Transverse colon (tissue), 4 donors: ENCODE measurements at regions of chr13 and their contacts with region 1.

Region 1: GRCh38 chr13:92317066-92317465 is 909.5 kb upstream of the GPC6 start:
- DNase-seq: no peak
- H3K4me3 ChIP-seq: no peak overlapping the region
- H3K27ac ChIP-seq: no peak overlapping the region
- H3K4me1 ChIP-seq: no peaks in the 10 kb centered on the region
- H3K27me3 ChIP-seq: no peaks in the 10 kb centered on the region
- CTCF ChIP-seq: no peak
- EP300 ChIP-seq: no peak
- POLR2A ChIP-seq: no peak

Region 2: GRCh38 chr13:92460479-92460878 is 143.4 kb after region 1 on chr13:
- in situ Hi-C with region 1: no loop called
- intact Hi-C with region 1: loop called (anchors 2 kb)
- DNase-seq: no peak
- H3K4me3 ChIP-seq: no peak overlapping the region
- H3K27ac ChIP-seq: peak overlapping the region in 2 of 4 donors; percentile 4 to 9
- H3K4me1 ChIP-seq: peaks cover 0 to 4% (median 0%) of the 10 kb centered on the region in 4 donors
- H3K27me3 ChIP-seq: no peaks in the 10 kb centered on the region
- CTCF ChIP-seq: no peak
- EP300 ChIP-seq: no peak
- POLR2A ChIP-seq: no peak